ENCODE measurements at regions of chr3 and their contacts with region 1.

Region 1: GRCh38 chr3:134212906-134213665 is 37.6 kb downstream of the RYK start:
- H3K4me3 ChIP-seq: no peak overlapping the region
- H3K27ac ChIP-seq: no peak overlapping the region
- H3K4me1 ChIP-seq: no peaks in the 10 kb centered on the region
- CTCF ChIP-seq: 0 out of 2 replicates have a peak, but pooled peaks have one; percentile 61

Region 2: GRCh38 chr3:133821767-133822638 is 391.1 kb before region 1 on chr3:
- CTCF ChIA-PET with region 1: interaction called, 12 read pairs
- POLR2A ChIA-PET with region 1: no interaction called
- H3K4me3 ChIP-seq: no peak overlapping the region
- H3K27ac ChIP-seq: no peak overlapping the region
- H3K4me1 ChIP-seq: no peaks in the 10 kb centered on the region
- CTCF ChIP-seq: no peak

Region 3: DNA sequence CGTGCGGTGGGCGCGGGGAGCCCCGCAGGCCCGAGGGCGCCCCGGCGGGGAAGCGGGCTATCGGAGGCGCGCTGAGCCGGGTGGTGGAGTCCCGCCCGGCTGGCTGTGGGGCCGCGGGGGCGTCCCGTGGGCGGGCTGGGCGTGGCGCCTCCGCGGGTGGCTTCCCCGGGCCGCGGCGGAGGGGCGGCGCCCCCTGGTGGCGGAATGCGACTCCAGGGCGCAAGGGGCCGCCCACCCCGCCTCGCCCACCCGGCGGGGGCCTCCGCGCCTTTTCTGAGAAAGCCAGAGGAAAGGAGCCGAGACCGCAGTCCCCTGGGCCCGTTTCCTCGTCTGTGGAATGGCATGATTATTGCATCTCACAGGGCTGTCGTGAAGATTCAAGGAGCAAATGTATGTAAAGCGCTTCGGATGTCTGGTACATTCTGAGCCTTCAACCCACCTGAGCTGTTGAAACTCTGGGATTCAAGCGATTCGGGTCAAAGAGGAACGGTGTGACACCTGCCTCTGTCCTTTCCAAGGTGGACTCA is 285.5 kb before region 1 on chr3:
- CTCF ChIA-PET with region 1: interaction called, 43 read pairs
- POLR2A ChIA-PET with region 1: no interaction called
- H3K4me3 ChIP-seq: peak overlapping the region; percentile 15
- H3K27ac ChIP-seq: no peak overlapping the region; the same call in 1 of the 2 replicates
- H3K4me1 ChIP-seq: no peaks in the 10 kb centered on the region
- CTCF ChIP-seq: no peak

Region 4: DNA sequence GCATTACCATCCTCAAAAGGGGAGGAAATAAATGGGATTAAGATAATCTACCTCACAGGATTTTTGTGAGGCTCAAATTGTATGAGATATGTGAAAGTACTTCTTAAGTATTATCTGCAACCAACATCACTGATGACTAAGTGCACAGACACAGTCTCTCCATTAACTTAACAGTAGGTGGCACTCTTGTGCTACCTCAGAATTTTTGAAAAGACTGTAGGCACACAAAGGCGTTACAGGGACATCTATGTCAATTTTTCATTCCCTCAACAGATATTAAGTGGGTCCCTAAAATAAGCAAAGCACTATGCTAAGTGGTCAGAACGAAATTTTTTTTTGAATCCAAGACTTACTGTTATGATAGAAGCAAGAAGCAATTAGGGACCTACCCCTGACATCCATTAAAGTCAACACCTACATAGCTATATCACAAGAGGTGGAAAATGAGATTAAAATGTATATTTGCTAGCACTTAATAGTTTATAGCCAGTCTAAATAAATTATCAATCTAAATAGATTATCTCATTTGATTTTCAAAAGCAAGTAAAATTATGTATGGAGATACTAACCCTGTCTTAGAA is 15.3 kb before region 1 on chr3:
- CTCF ChIA-PET with region 1: interaction called, 28 read pairs
- POLR2A ChIA-PET with region 1: interaction called, 4 read pairs
- H3K4me3 ChIP-seq: no peak overlapping the region
- H3K27ac ChIP-seq: no peak overlapping the region
- H3K4me1 ChIP-seq: no peaks in the 10 kb centered on the region
- CTCF ChIP-seq: no peak

Region 5: GRCh38 chr3:134232151-134232550 is 19.1 kb after region 1 on chr3:
- CTCF ChIA-PET with region 1: interaction called, 26 read pairs
- POLR2A ChIA-PET with region 1: no interaction called
- H3K4me3 ChIP-seq: no peak overlapping the region
- H3K27ac ChIP-seq: no peak overlapping the region
- H3K4me1 ChIP-seq: peaks cover 8% of the 10 kb centered on the region
- CTCF ChIP-seq: no peak

Region 6: GRCh38 chr3:134299185-134299887 is 86.2 kb after region 1 on chr3:
- CTCF ChIA-PET with region 1: interaction called, 31 read pairs
- POLR2A ChIA-PET with region 1: no interaction called
- H3K4me3 ChIP-seq: no peak overlapping the region
- H3K27ac ChIP-seq: no peak overlapping the region
- H3K4me1 ChIP-seq: no peaks in the 10 kb centered on the region
- CTCF ChIP-seq: no peak

Region 7: DNA sequence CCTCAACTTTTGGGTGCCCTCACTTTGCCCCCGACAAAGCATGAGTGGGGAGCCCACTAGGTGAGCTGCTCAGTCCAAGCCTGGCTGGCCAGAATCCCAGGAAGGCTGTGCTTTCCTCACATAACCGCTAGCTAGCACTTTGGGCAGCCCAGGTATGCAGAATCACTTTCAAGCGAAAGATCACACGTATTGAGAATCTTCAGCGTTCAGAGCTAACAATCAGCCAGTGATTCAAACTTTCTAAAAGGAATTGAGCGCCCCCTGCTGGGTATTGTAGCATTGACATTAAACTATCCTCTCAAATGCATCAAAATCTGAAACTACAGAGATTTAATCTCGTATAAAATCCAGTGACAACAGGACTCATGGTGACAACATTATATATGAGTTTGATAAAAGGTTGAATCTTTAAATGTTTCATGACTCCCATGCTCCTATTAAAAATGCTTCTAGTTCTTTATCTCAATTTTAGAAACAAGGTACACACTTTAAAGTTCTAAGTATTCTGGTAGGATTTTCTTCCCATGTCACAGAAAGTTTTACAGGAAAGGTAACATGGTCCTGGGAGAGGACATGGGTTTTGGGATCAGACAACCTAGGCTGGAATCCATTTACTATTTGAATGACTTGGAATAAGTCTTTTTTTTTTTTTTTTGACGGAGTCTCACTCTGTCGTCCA is 260.9 kb after region 1 on chr3:
- CTCF ChIA-PET with region 1: interaction called, 23 read pairs
- POLR2A ChIA-PET with region 1: no interaction called
- H3K4me3 ChIP-seq: no peak overlapping the region
- H3K27ac ChIP-seq: no peak overlapping the region
- H3K4me1 ChIP-seq: no peaks in the 10 kb centered on the region
- CTCF ChIP-seq: peak; percentile 40; the same call in 1 of the 2 replicates